Ovary (tissue), 10 donors: ENCODE measurements at regions of chr15 and their contacts with region 1.

Region 1: DNA sequence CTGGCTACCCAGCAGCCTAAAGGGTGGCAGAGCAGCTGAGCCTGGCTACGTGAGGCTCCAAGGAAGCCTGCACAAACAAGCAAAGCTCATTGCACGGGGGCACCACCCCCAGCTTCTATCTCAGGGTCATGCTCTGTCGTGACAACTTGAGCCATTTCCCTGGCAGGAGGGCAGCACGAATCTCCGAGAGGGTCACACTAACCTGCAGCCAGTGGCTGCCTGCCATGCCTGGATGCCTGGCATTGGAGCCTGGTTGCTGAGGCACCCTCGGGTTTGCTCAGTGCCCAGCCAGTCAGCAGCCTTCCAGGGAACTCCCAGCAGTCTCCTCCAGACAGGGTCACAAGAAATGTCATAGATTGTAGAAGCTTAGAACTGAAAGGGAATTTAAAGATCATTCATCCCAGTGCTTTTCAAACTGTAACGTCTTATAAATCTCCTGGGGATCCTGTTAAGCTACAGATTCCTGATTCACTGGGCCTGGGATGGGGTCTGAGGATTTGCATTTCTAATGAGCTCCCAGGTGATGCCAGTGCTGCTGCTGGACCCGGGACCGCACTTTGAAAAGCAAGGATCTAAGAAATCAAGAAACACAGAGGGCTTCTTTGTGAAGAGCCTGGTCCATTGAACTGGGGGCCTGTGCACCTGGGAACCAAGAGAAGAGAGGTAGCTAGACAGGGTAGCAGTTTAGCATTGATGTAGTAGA is 48.4 kb downstream of the TMEM266 start:
- DNase-seq: no peak
- H3K4me3 ChIP-seq: no peak overlapping the region
- H3K27ac ChIP-seq: no peak overlapping the region
- H3K4me1 ChIP-seq: no peaks in the 10 kb centered on the region
- H3K27me3 ChIP-seq: no peaks in the 10 kb centered on the region
- CTCF ChIP-seq: no peak
- EP300 ChIP-seq: no peak
- POLR2A ChIP-seq: no peak

Region 2: DNA sequence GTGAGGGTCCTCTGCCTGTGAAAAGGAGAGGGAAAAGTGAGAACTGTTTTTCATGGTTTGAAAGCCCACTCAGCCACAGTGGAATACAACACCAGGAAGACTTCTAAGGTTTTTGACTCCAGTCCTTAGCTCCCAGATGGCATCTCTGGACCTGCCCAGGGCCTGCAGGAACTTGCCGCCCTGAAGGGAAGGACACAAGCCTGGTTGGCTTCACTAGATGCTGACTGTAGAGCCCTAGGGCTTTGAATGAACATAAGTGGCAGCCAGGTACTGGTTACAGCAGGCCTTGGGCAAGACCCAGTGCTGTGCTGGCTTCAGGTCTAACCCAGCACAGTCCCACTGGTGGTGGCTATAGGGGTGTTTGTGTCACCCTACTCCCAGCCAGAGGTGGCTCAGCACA is 69.7 kb before region 1 on chr15:
- intact Hi-C with region 1: loop called in 1 of 4 experiments (anchors 10 kb)
- DNase-seq: no peak
- H3K4me3 ChIP-seq: no peak overlapping the region
- H3K27ac ChIP-seq: no peak overlapping the region
- H3K4me1 ChIP-seq: no peaks in the 10 kb centered on the region
- H3K27me3 ChIP-seq: no peaks in the 10 kb centered on the region
- CTCF ChIP-seq: no peak
- EP300 ChIP-seq: no peak
- POLR2A ChIP-seq: no peak

Region 3: DNA sequence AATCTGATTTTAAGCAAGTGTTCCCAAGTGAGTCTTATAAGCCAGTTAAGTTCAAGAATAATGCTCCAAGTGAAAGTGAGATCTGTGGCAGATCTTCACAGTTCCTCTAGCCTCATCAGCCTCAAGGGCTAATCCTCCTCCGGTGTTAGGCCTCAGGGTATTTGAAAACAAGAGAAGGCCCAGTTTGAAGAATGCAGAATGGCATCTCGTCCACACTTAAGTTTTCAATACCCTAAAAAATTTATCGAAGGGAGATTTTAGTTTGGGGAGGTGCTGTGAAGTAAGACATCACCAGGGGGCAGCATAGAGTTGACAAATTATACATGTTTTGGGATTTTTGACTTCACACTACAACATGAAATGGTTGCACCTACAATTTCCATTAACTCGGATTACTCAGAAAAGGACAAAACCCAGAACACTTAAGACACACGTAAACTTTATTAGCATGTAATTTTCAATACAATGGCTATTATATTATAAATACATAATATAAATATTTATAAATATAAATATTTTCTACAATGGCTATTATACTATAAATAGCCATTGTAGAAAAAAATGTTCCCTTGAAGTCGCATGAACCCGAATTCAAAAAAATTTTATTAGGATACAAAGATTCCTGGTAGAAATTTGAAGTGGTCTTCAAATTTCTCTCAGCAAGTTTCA is 50.7 kb before region 1 on chr15:
- intact Hi-C with region 1: no loop called
- DNase-seq: no peak
- H3K4me3 ChIP-seq: no peak overlapping the region
- H3K27ac ChIP-seq: no peak overlapping the region
- H3K4me1 ChIP-seq: peaks cover 1% of the 10 kb centered on the region
- H3K27me3 ChIP-seq: no peaks in the 10 kb centered on the region
- CTCF ChIP-seq: peak in 1 of 3 donors; percentile 31
- EP300 ChIP-seq: no peak
- POLR2A ChIP-seq: no peak